ENCODE measurements at regions of chr4 and their contacts with region 1.

Region 1: GRCh38 chr4:48578132-48578968 is 88.3 kb downstream of the ZAR1 start:
- DNase-seq: peak; percentile 12
- ATAC-seq: peak; percentile 90
- H3K4me3 ChIP-seq: no peak overlapping the region
- H3K27ac ChIP-seq: no peak overlapping the region
- H3K4me1 ChIP-seq: no peaks in the 10 kb centered on the region
- H3K27me3 ChIP-seq: no peaks in the 10 kb centered on the region
- CTCF ChIP-seq: peak; percentile 82 to 86 (median 85)
- EP300 ChIP-seq: no peak
- POLR2A ChIP-seq: no peak
- RAD21 ChIP-seq: peak; percentile 93

Region 2: GRCh38 chr4:48553720-48554119 is 24.6 kb before region 1 on chr4:
- CTCF ChIA-PET with region 1: no interaction called
- POLR2A ChIA-PET with region 1: no interaction called
- RAD21 ChIA-PET with region 1: no interaction called
- SMC1A ChIA-PET with region 1: no interaction called
- in situ Hi-C with region 1: no loop called
- intact Hi-C with region 1: no loop called
- DNase-seq: no peak
- ATAC-seq: no peak
- H3K4me3 ChIP-seq: no peak overlapping the region
- H3K27ac ChIP-seq: no peak overlapping the region
- H3K4me1 ChIP-seq: no peaks in the 10 kb centered on the region
- H3K27me3 ChIP-seq: no peaks in the 10 kb centered on the region
- CTCF ChIP-seq: no peak
- EP300 ChIP-seq: no peak
- POLR2A ChIP-seq: no peak
- RAD21 ChIP-seq: no peak

Region 3: DNA sequence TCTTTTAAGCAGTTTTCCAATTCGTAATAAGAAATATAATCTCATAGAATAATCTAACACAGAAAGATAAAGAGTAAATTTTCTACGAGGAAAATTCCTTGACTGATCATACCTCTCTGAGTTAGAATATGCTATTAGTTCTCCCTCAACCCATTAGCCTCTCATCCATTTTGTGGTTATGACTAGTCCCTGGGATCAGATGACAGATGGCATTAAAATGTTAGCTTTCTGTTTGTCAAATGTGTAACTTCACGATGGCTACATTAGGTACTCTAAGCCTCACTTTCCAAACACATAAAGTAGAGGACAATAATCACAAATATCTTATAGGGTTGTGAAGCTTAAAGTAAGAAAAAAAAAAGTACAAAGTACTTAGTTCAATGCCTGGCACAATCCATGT is 23.9 kb after region 1 on chr4:
- CTCF ChIA-PET with region 1: interaction called, 10 read pairs
- POLR2A ChIA-PET with region 1: no interaction called
- RAD21 ChIA-PET with region 1: no interaction called
- SMC1A ChIA-PET with region 1: interaction called, 4 read pairs
- in situ Hi-C with region 1: no loop called
- intact Hi-C with region 1: no loop called
- DNase-seq: no peak
- ATAC-seq: no peak
- H3K4me3 ChIP-seq: no peak overlapping the region
- H3K27ac ChIP-seq: no peak overlapping the region
- H3K4me1 ChIP-seq: no peaks in the 10 kb centered on the region
- H3K27me3 ChIP-seq: no peaks in the 10 kb centered on the region
- CTCF ChIP-seq: no peak
- EP300 ChIP-seq: no peak
- POLR2A ChIP-seq: no peak
- RAD21 ChIP-seq: no peak

Region 4: GRCh38 chr4:48681856-48682255 is 103.5 kb after region 1 on chr4:
- CTCF ChIA-PET with region 1: interaction called, 57 read pairs
- POLR2A ChIA-PET with region 1: no interaction called
- RAD21 ChIA-PET with region 1: interaction called, 26 read pairs
- SMC1A ChIA-PET with region 1: interaction called, 36 read pairs
- in situ Hi-C with region 1: no loop called
- intact Hi-C with region 1: loop called (anchors 1 kb)
- DNase-seq: peak; percentile 35
- ATAC-seq: peak; percentile 94
- H3K4me3 ChIP-seq: no peak overlapping the region
- H3K27ac ChIP-seq: no peak overlapping the region
- H3K4me1 ChIP-seq: peaks cover 13% of the 10 kb centered on the region
- H3K27me3 ChIP-seq: no peaks in the 10 kb centered on the region
- CTCF ChIP-seq: peak; percentile 30 to 69 (median 38); a peak in 4 of 6 replicates
- EP300 ChIP-seq: no peak
- POLR2A ChIP-seq: no peak
- RAD21 ChIP-seq: peak; percentile 71

Region 5: DNA sequence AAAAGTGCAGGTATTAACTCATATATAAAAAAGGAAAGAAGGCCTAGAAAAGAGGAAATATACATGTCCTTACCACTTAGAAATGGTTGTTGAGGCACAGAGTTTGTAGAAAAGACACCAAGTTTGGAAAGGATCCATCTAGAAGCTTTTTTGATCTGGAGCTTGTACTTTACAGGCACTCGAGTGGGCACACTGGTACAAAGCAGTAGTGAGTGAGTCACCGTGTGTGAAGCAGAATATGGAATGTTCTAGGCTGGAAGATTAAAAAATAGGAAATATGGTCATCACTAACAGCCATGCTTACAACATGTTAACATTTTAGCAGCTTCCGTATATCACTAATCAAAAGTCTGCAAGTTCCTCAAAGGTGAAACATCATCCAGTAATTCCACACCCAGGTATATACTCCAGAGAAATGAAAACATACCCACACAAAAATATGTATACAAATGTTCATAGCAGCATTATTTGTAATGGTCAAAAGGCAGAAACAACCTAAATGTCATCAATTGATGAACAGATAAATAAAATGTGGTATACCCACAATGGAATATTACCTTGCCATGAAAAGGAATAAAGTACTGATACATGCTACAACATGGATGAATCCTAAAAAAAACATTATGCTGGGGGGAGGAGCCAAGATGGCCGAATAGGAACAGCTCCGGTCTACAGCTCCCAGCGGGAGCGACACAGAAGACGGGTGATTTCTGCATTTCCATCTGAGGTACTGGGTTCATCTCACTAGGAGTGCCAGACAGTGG is 132.3 kb after region 1 on chr4:
- CTCF ChIA-PET with region 1: no interaction called
- POLR2A ChIA-PET with region 1: no interaction called
- RAD21 ChIA-PET with region 1: no interaction called
- SMC1A ChIA-PET with region 1: no interaction called
- in situ Hi-C with region 1: no loop called
- intact Hi-C with region 1: no loop called
- DNase-seq: no peak
- ATAC-seq: no peak
- H3K4me3 ChIP-seq: no peak overlapping the region
- H3K27ac ChIP-seq: no peak overlapping the region
- H3K4me1 ChIP-seq: no peaks in the 10 kb centered on the region
- H3K27me3 ChIP-seq: no peaks in the 10 kb centered on the region
- CTCF ChIP-seq: no peak
- EP300 ChIP-seq: no peak
- POLR2A ChIP-seq: no peak
- RAD21 ChIP-seq: no peak

Region 6: DNA sequence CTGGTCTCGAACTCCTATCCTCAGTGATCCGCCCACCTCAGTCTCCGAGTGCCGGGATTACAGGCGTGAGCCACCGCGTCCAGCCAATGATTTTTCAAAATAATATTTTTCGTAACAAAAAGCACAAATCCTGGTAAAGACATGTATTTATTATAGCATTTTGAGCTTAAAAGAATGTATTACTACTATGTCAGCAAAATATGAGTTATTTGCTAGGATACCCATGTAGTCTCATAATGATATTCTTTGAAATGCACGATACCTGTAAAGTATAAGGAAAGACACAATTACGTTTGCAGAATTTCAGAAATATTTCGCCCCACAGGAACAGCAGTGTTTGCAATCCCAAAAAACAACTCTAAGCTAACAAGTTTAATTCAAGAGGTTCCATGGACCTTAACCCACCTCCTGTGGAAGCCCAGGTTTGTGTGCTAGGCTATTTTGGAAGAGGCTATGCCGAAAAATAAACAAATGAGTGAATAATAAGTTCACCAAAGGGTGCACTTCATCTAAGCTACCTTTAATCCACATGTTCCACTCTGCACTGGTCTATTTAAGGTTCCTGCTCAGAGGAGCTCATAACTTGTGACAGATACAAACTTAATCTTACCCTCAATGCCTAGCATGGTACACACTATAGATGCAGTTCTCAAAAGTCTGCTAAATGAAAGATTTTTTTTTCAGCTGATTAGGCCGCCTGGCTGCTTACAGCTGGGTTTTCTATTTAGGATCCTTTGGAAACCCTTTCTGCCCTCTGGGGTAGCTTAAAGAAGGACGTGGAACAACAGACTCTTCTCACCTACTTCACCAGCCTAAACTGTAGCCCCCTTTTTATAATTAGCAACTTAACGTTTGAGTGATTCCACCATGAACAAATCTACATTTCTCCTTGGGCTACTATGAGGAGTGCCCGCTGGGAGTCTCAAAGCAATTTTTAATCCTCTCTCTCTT is 196.7 kb after region 1 on chr4:
- CTCF ChIA-PET with region 1: interaction called, 38 read pairs
- POLR2A ChIA-PET with region 1: interaction called, 3 read pairs
- RAD21 ChIA-PET with region 1: interaction called, 4 read pairs
- SMC1A ChIA-PET with region 1: interaction called, 4 read pairs
- in situ Hi-C with region 1: no loop called
- intact Hi-C with region 1: loop called (anchors 5 kb)
- DNase-seq: no peak
- ATAC-seq: no peak
- H3K4me3 ChIP-seq: peak overlapping the region; percentile 20; the same call in 1 of the 2 replicates
- H3K27ac ChIP-seq: no peak overlapping the region
- H3K4me1 ChIP-seq: peaks cover 2% of the 10 kb centered on the region; the same call in 1 of the 2 replicates
- H3K27me3 ChIP-seq: no peaks in the 10 kb centered on the region
- CTCF ChIP-seq: no peak
- EP300 ChIP-seq: no peak
- POLR2A ChIP-seq: no peak
- RAD21 ChIP-seq: no peak

Region 7: GRCh38 chr4:48844843-48845242 is 266.5 kb after region 1 on chr4:
- CTCF ChIA-PET with region 1: no interaction called
- POLR2A ChIA-PET with region 1: no interaction called
- RAD21 ChIA-PET with region 1: no interaction called
- SMC1A ChIA-PET with region 1: interaction called, 3 read pairs
- in situ Hi-C with region 1: no loop called
- intact Hi-C with region 1: loop called (anchors 5 kb)
- DNase-seq: no peak
- ATAC-seq: no peak
- H3K4me3 ChIP-seq: no peak overlapping the region
- H3K27ac ChIP-seq: no peak overlapping the region
- H3K4me1 ChIP-seq: no peaks in the 10 kb centered on the region
- H3K27me3 ChIP-seq: no peaks in the 10 kb centered on the region
- CTCF ChIP-seq: no peak
- EP300 ChIP-seq: no peak
- POLR2A ChIP-seq: no peak
- RAD21 ChIP-seq: no peak

Region 8: GRCh38 chr4:48944756-48945241 is 366.4 kb after region 1 on chr4:
- CTCF ChIA-PET with region 1: interaction called, 19 read pairs
- POLR2A ChIA-PET with region 1: no interaction called
- RAD21 ChIA-PET with region 1: no interaction called
- SMC1A ChIA-PET with region 1: interaction called, 14 read pairs
- in situ Hi-C with region 1: no loop called
- intact Hi-C with region 1: no loop called
- DNase-seq: no peak
- ATAC-seq: peak; percentile 58
- H3K4me3 ChIP-seq: no peak overlapping the region
- H3K27ac ChIP-seq: no peak overlapping the region
- H3K4me1 ChIP-seq: no peaks in the 10 kb centered on the region
- H3K27me3 ChIP-seq: peaks cover 0 to 3% of the 10 kb centered on the region in 2 experiments; a peak in 1 of 4 replicates
- CTCF ChIP-seq: peak; percentile 34 to 69 (median 51)
- EP300 ChIP-seq: no peak
- POLR2A ChIP-seq: no peak
- RAD21 ChIP-seq: peak; percentile 39; the same call in 1 of the 2 replicates

Measured in GM12878 (cell line).